ENCODE measurements at regions of chr14 and their contacts with region 1.

Region 1: DNA sequence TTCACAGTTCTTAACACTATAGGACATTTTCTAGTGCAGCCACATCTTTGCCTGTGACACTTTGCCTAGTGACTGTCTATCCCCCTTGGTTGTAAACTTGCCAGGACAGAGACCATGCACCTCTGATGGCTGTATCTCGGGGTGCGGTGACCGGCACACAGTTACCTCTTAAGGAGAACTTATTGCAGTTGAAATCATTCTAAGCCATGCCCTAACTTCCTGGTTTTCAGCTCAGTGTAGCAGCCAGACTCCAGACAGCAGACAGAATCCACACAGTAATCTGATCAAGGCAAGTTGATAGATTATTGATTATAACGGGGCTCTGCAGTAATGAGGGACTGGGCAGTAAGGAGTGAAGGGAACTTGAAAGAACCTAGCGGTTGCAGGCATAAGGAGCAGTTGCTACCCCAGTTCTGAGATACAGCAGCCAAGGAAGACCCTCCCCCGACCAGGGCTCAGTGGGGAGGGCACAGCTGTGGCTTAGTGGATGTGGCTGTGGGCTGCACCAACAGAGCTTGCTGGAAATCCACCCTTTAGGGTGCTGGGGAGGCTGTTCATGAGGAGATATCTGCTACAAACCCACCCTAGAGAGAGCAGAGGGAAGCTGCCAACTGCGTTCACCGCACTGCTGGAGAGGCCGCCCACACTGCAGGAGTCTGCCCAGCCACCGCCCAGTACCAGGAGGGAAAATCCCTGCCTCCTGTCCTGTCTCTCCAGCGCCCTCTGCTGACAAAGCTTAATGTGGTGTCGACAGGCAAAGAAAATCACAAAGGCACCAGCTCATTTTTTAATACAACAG is 58.2 kb upstream of the BEGAIN start:
- DNase-seq: peak; percentile 95

Region 2: GRCh38 chr14:100375963-100376735 is 269.2 kb before region 1 on chr14:
- in situ Hi-C with region 1: loop called (anchors 25 kb)
- DNase-seq: peak; percentile 97

Region 3: GRCh38 chr14:100524933-100525243 is 120.5 kb before region 1 on chr14:
- in situ Hi-C with region 1: loop called (anchors 5 kb)
- DNase-seq: peak; percentile 65

Region 4: DNA sequence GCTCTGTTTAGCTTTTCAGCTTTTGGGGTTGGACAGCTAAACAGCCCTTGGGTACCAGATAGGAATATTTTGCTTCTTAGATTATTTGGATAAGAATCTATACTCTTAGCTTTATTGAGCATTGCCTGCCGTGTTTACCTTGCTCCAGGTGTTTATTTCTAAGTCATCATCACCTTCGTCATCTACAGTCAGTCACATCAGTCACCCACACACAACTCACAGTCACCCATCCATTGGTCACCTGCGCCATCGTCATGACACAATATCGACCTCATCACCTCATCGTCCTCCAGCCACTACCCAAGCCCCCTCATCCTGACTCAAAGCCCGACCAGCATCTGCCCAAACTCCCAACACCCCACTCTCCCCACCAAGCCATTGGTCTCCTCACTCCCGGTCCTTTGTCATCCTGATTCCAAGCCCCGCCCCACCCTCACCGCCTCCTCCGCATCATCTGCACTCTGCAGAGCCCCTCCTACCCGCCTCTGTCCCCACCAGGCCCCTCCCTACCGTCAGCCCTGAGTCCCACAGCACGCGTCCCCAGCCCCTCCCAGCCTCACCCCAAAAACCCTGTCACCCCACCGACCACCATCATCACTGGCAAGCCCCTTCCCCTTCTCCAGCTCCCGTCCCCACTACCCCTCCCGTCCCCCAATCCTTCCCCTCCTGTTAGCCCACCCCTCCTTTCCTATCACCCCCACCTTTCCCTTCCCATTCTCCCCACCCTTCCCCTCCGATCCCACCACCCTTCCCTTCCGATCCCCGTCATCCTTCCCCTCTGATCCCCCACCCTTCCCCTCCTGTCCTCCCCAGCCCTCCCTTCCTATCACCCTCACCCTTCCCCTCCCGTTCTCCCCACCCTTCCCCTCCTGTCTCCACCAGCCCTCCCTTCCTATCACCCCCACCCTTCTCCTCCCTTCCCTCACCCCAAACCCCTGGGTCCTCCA is 91.1 kb after region 1 on chr14:
- in situ Hi-C with region 1: no loop called
- DNase-seq: no peak

Measured in KBM-7 (cell line).